Activated naive CD4-positive, alpha-beta T cell treated with anti-CD3 and anti-CD28 coated beads, Interleukin-2, amount 10 ng/mL, durations not matched to agents 7 days and 5 days (primary cell): ENCODE measurements at regions of chr5 and their contacts with region 1.

Region 1: GRCh38 chr5:36507332-36507952 is 99.0 kb upstream of the SLC1A3 start:
- DNase-seq: peak; percentile 80
- H3K4me3 Mint-ChIP-seq: no peak overlapping the region
- H3K27ac Mint-ChIP-seq: no peak overlapping the region
- H3K4me1 Mint-ChIP-seq: peaks cover 4% of the 10 kb centered on the region
- H3K27me3 Mint-ChIP-seq: peaks cover 15% of the 10 kb centered on the region

Region 2: DNA sequence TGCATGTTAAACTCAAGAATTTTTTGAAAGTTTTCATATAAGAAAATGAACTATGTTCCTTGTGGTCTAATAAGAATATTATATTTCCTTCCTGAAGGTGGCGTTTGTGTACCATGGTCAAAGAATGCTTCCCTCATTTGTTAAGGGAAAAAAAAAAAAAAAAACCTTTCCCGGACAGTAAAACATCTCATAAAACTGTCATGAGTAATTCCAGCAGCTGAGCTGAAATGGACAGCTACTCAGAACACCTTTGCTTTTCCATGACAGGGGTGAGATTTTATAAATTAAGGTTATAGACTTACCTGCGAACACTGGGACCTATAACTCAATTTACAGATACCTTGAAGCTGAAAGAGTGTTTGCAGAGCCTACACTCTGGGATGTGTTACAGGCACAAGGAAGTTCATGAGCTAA is 92.6 kb before region 1 on chr5:
- CTCF ChIA-PET with region 1: interaction called, 36 read pairs
- DNase-seq: no peak
- H3K4me3 Mint-ChIP-seq: no peak overlapping the region
- H3K27ac Mint-ChIP-seq: no peak overlapping the region
- H3K4me1 Mint-ChIP-seq: peaks cover 10% of the 10 kb centered on the region
- H3K27me3 Mint-ChIP-seq: peaks cover 5% of the 10 kb centered on the region